ENCODE measurements at regions of chr12 and their contacts with region 1.

Region 1: DNA sequence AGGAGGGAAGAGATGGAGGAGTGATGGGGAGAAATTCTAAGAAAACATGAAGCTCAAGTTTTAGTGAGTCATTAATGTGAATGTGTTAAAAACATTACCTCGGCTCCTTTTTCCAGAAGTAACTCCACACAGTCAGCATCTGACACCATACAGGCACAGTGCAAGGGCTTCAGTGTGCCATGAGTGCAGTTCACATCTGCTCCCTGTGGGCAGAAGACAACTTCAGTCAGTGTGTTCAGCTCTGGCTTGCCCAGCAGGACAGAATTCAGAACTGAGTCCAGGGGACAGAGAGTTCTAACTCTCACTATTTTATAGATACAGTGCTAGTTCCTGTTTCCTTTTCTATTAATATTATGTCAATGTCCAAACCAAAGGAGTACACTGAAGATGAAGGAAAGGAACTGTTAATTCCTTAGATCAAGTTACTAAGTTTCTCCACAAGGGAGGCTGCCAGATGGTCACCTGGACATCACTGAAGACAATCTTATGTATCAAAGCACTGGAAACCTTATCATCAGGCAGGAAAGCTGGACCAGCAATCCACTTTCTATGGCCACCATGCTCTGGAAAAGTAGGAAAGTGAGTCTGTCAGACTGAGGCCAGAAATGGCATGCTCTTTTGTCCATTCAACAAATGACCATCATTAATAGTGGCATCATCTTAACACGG is 6.1 kb downstream of the ASB8 start:
- DNase-seq: no peak
- H3K4me3 ChIP-seq: no peak overlapping the region
- H3K27ac ChIP-seq: no peak overlapping the region
- H3K4me1 ChIP-seq: no peaks in the 10 kb centered on the region
- H3K27me3 ChIP-seq: no peaks in the 10 kb centered on the region
- CTCF ChIP-seq: no peak
- EP300 ChIP-seq: no peak
- POLR2A ChIP-seq: no peak
- RAD21 ChIP-seq: no peak

Region 2: DNA sequence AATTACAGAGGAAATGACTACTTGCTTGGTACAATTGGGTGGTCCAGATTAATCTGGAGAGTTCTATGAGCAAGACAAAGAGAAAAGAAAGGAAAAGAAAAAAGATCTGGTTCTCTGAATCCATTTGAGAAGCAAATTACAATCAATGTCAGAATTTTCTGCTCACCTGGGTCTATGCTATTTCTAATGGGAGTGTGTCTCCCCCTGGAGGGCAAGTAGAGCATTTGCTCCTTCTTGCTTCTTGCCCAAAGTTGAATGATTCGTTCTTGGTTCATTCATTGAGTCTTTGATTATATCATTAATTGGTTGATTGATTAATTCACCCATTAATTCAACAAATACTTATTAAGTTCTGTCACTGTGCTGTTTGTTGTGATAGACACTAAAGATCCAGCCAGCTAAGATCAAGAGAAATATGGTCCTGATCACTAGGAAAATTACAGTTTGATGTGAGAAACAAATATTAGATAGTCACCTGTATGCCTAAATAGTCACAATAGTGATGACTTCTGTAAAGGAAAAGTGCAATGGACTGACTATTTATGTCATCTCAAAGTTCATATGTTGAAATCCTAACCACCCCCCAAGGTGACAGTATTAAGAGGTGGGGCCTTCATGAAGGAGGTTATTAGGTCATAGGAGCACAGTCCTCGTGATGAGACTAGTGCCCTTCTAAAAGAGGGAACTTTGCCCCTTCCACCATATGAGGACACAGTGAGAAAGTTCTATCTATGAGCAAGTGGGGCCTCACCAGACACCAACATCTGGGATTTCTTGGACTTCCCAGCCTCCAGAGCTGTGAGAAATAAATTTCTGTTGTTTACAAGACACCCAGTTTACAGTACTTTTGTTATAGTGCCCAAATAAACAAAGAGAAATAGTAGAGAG is 14.1 kb after region 1 on chr12:
- CTCF ChIA-PET with region 1: interaction called, 18 read pairs
- POLR2A ChIA-PET with region 1: interaction called, 3 read pairs
- DNase-seq: no peak
- H3K4me3 ChIP-seq: no peak overlapping the region
- H3K27ac ChIP-seq: no peak overlapping the region
- H3K4me1 ChIP-seq: no peaks in the 10 kb centered on the region; a peak in 1 of 7 replicates
- H3K27me3 ChIP-seq: no peaks in the 10 kb centered on the region
- CTCF ChIP-seq: peak in 2 of 3 experiments; percentile 76 to 87; a peak in 3 of 4 replicates
- EP300 ChIP-seq: no peak
- POLR2A ChIP-seq: no peak
- RAD21 ChIP-seq: peak; percentile 92

Region 3: DNA sequence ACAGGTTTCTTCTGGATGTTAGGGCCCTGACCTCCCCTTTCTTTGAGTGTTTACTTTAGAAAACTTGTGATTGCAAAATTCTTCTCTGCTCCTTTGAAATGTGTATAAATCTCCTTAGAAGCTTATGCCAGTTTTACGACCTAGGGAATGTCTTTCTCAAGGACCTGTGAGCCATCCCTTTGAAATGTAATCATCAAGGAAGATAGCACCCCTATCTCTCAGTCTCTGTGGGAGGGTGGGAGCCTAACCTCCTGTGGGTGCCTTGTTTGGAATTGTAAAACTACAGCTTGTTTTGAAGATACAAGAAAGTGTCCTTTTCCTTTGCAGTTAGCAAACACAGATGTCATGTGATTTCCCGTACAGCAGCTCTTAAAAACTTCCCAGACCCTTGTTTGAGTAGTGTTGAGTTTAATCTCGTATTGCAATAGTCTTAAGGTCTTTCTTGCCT is 48.6 kb after region 1 on chr12:
- CTCF ChIA-PET with region 1: no interaction called
- POLR2A ChIA-PET with region 1: no interaction called
- DNase-seq: no peak
- H3K4me3 ChIP-seq: no peak overlapping the region
- H3K27ac ChIP-seq: no peak overlapping the region
- H3K4me1 ChIP-seq: peaks cover 0 to 2% (median 2%) of the 10 kb centered on the region in 4 experiments; a peak in 2 of 7 replicates
- H3K27me3 ChIP-seq: peaks cover 5 to 23% (median 23%) of the 10 kb centered on the region in 4 experiments
- CTCF ChIP-seq: no peak
- EP300 ChIP-seq: no peak
- POLR2A ChIP-seq: no peak
- RAD21 ChIP-seq: no peak

Measured in H1 (cell line).